H1 (cell line): ENCODE measurements at regions of chr17 and their contacts with region 1.

Region 1: DNA sequence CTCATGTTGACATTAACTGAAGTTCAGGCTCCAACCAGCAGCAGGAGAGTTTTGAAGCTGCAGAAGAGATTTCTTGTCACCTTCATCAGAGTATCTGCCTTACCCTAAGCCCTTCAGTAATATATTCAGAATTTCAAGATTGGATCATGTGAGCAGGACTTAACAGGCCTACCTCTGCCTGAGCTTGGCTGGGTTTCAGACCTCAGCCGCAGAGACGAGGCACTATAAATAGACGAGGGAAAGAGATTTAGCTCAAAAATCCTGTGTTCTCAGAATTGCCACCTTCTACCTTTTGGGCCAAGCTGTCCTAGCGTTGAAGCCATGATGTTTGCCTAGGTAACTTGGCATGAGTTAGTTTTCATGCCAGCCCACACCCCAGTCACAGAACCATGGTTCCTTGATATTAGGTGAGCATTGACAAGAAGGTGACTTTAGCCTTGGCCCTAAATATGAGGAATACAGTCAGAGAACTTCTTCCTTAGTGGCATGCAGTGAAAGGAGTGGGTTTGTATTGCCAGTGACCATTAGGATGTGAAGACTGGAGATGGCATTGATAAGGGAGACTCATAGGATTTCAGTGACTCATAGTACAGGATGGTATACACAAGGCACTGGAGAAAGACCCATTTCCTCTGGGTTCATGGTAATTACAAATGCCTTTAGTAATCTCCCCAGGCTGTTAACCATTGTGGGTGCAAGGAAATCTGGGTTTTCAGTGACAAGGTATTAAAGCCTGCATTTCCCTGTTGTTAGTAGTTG is 224.3 kb downstream of the MSI2 start:
- DNase-seq: no peak
- H3K4me3 ChIP-seq: no peak overlapping the region
- H3K27ac ChIP-seq: no peak overlapping the region
- H3K4me1 ChIP-seq: peaks cover 0 to 15% (median 10%) of the 10 kb centered on the region in 4 experiments; a peak in 5 of 7 replicates
- H3K27me3 ChIP-seq: no peaks in the 10 kb centered on the region; a peak in 2 of 7 replicates
- CTCF ChIP-seq: no peak
- EP300 ChIP-seq: no peak
- POLR2A ChIP-seq: no peak
- RAD21 ChIP-seq: no peak

Region 2: DNA sequence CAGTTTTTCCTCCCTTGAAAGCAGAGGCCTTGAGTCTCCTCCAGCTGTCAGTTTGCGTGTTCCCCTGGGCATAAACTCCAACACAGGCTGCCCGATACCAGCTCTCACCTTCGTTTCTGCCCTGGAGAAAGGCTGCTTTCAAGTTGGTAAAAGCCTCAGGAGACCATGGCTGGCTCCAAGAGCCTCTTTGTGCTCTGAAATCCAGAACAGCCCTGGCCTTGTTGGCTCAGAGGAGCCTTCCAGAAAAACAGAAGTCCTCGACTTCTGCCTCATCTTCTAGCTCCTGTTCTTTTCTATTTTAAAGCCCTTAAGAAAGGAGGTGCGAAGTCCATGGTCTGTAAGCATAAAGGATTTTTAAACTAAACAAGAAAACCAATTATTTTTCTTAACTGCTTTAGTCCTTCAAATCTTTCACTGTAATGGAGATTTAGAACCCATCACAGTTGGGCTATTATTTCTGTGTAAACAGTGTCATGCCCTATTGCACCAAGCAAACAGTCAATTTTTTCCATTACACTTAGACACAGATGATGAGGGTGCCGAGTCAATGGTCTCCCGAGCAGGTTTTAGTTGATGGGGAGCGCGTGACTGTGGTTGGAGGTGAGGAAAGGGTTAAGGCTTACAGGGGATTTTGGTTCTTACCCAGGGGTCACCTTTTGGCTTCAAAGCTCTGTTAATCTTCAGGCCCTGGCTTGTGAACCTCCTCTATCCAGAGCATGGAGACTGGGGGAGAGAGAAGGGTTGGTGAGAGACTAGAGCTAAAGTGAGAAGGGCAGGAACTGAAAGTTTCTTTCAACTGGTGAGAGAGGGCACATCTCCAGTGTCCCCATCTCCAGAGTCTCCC is 11.5 kb before region 1 on chr17:
- CTCF ChIA-PET with region 1: interaction called, 29 read pairs
- POLR2A ChIA-PET with region 1: interaction called, 3 read pairs
- DNase-seq: no peak
- H3K4me3 ChIP-seq: no peak overlapping the region
- H3K27ac ChIP-seq: no peak overlapping the region
- H3K4me1 ChIP-seq: peaks cover 10 to 47% (median 43%) of the 10 kb centered on the region in 4 experiments
- H3K27me3 ChIP-seq: no peaks in the 10 kb centered on the region
- CTCF ChIP-seq: no peak
- EP300 ChIP-seq: no peak
- POLR2A ChIP-seq: no peak
- RAD21 ChIP-seq: no peak